ENCODE measurements at regions of chr4 and their contacts with region 1.

Region 1: GRCh38 chr4:36292556-36293188 is 11.3 kb downstream of the DTHD1 start:
- DNase-seq: no peak
- H3K4me3 ChIP-seq: no peak overlapping the region
- H3K27ac ChIP-seq: no peak overlapping the region
- H3K4me1 ChIP-seq: no peaks in the 10 kb centered on the region
- H3K27me3 ChIP-seq: no peaks in the 10 kb centered on the region
- CTCF ChIP-seq: no peak

Region 2: GRCh38 chr4:36189511-36190226 is 103.0 kb before region 1 on chr4:
- CTCF ChIA-PET with region 1: no interaction called
- POLR2A ChIA-PET with region 1: no interaction called
- intact Hi-C with region 1: loop called (anchors 10 kb)
- DNase-seq: no peak
- H3K4me3 ChIP-seq: no peak overlapping the region
- H3K27ac ChIP-seq: no peak overlapping the region
- H3K4me1 ChIP-seq: no peaks in the 10 kb centered on the region
- H3K27me3 ChIP-seq: no peaks in the 10 kb centered on the region
- CTCF ChIP-seq: no peak

Region 3: GRCh38 chr4:36274158-36274557 is 18.5 kb before region 1 on chr4:
- CTCF ChIA-PET with region 1: no interaction called
- POLR2A ChIA-PET with region 1: interaction called, 10 read pairs
- intact Hi-C with region 1: no loop called
- DNase-seq: no peak
- H3K4me3 ChIP-seq: no peak overlapping the region
- H3K27ac ChIP-seq: no peak overlapping the region
- H3K4me1 ChIP-seq: peaks cover 8% of the 10 kb centered on the region; the same call in 1 of the 2 replicates
- H3K27me3 ChIP-seq: no peaks in the 10 kb centered on the region
- CTCF ChIP-seq: no peak

Region 4: GRCh38 chr4:36532670-36533379 is 240.2 kb after region 1 on chr4:
- CTCF ChIA-PET with region 1: no interaction called
- POLR2A ChIA-PET with region 1: no interaction called
- intact Hi-C with region 1: no loop called
- DNase-seq: no peak
- H3K4me3 ChIP-seq: no peak overlapping the region
- H3K27ac ChIP-seq: no peak overlapping the region
- H3K4me1 ChIP-seq: no peaks in the 10 kb centered on the region
- H3K27me3 ChIP-seq: no peaks in the 10 kb centered on the region
- CTCF ChIP-seq: no peak

Measured in PC-9 (cell line).